ENCODE measurements at regions of chr9 and their contacts with region 1.

Region 1: GRCh38 chr9:82606492-82607382 is 456.2 kb downstream of the RASEF start:
- H3K4me3 ChIP-seq: no peak overlapping the region
- H3K27ac ChIP-seq: no peak overlapping the region
- H3K4me1 ChIP-seq: peaks cover 2% of the 10 kb centered on the region; the same call in 1 of the 2 replicates
- CTCF ChIP-seq: peak; percentile 53

Region 2: DNA sequence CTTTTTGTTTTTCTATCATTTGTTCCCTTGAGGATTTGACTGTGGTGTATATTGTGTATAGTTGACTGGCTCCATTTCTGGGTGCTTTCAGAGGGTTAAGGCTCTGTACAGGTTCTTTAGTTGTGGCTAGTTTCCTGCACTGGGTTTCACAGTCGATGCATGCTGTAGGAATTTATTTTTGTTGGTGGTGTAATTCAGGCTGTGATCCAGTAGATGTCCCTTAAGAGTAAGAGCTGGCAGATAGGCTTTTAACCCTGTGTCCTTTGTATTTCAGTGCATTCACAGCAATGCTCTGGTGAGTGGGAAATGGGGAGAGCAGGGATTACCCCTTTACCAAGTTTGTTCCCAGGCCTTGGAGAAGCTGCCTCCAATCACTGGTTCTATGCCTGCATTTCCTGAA is 505.3 kb before region 1 on chr9:
- CTCF ChIA-PET with region 1: interaction called, 20 read pairs
- POLR2A ChIA-PET with region 1: no interaction called
- H3K4me3 ChIP-seq: no peak overlapping the region
- H3K27ac ChIP-seq: no peak overlapping the region
- H3K4me1 ChIP-seq: no peaks in the 10 kb centered on the region
- CTCF ChIP-seq: no peak

Region 3: GRCh38 chr9:82532504-82533180 is 74.1 kb before region 1 on chr9:
- CTCF ChIA-PET with region 1: interaction called, 83 read pairs
- POLR2A ChIA-PET with region 1: no interaction called
- H3K4me3 ChIP-seq: no peak overlapping the region
- H3K27ac ChIP-seq: no peak overlapping the region
- H3K4me1 ChIP-seq: no peaks in the 10 kb centered on the region
- CTCF ChIP-seq: no peak

Region 4: DNA sequence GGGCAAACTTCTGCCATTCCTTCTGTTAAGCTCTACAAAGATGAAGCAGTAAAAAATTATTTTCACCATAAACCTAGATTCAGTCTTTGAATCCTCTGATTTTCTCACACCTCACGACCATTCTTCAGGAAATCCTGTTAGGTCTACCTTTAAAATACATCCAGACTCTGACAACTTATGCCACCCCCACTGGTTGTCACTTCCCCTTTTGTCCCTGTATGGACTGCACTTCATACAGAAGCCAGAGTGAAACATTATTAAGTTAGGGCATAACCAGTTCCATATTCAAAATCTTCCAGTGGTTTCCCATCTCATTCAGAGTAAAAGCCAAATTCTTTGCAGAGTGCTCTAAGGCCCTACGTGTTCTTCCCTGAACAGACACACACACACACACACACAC is 43.6 kb before region 1 on chr9:
- CTCF ChIA-PET with region 1: no interaction called
- POLR2A ChIA-PET with region 1: no interaction called
- H3K4me3 ChIP-seq: no peak overlapping the region
- H3K27ac ChIP-seq: no peak overlapping the region
- H3K4me1 ChIP-seq: no peaks in the 10 kb centered on the region
- CTCF ChIP-seq: no peak

Region 5: DNA sequence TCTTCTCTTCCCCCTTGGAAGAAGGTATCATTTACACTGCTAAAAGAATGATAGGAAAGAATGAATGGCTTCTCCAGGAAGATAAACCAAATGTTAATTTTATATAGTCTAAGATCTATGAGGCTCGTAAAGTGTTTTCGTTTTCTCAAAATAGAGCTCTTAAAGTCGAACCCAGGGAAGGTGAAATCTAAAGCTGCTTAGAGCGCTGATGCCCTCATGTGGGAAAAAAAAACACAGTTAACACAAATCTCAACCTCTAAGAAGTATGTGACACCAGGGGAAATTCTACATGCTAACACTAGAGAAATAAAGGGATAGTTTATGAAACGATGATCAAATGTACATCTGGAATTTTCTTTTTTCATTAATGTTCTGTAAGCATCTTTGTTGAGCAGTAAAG is 198.3 kb after region 1 on chr9:
- CTCF ChIA-PET with region 1: interaction called, 24 read pairs
- POLR2A ChIA-PET with region 1: interaction called, 3 read pairs
- H3K4me3 ChIP-seq: no peak overlapping the region
- H3K27ac ChIP-seq: no peak overlapping the region
- H3K4me1 ChIP-seq: no peaks in the 10 kb centered on the region
- CTCF ChIP-seq: peak; percentile 34; the same call in 1 of the 2 replicates

Region 6: GRCh38 chr9:82961504-82962125 is 354.9 kb after region 1 on chr9:
- CTCF ChIA-PET with region 1: interaction called, 14 read pairs
- POLR2A ChIA-PET with region 1: no interaction called
- H3K4me3 ChIP-seq: no peak overlapping the region
- H3K27ac ChIP-seq: peak overlapping the region; percentile 21; the same call in 1 of the 2 replicates
- H3K4me1 ChIP-seq: peaks cover 8% of the 10 kb centered on the region
- CTCF ChIP-seq: peak; percentile 70

Measured in HEK293 (cell line).